Activated CD8-positive, alpha-beta T cell treated with anti-CD3 and anti-CD28 coated beads for 36 hours (primary cell): ENCODE measurements at regions of chr12 and their contacts with region 1.

Region 1: DNA sequence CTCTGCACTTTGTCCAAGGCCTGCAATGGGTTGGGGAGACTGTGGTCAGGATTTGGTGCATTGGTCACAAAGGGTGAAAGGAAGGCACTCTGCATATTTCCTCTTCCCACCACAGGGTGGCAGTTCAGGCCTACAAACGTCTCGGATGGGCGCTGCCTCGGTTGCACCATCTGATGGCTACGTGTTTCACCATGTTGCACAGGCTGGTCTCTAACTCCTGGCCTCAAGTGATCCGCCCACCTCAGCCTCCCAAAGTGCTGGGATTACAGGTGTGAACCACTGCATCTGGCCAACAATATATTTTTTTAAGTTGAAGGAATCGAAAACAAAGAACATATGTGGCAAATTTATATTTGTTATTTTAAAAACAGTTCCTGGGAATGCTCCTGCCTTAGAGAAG is 35.1 kb downstream of the TMBIM6 start:
- DNase-seq: peak; percentile 82
- ATAC-seq: peak; percentile 97
- H3K4me3 Mint-ChIP-seq: no peak overlapping the region
- H3K27ac Mint-ChIP-seq: peak overlapping the region; percentile 33
- H3K4me1 Mint-ChIP-seq: peaks cover 13% of the 10 kb centered on the region
- H3K27me3 Mint-ChIP-seq: peaks cover 8% of the 10 kb centered on the region
- CTCF ChIP-seq: peak; percentile 79

Region 2: GRCh38 chr12:49707128-49707811 is 69.1 kb before region 1 on chr12 and contains the start of gene FMNL3:
- CTCF ChIA-PET with region 1: interaction called, 11 read pairs
- POLR2A ChIA-PET with region 1: no interaction called
- intact Hi-C with region 1: no loop called
- DNase-seq: peak; percentile 98
- ATAC-seq: peak; percentile 91
- H3K4me3 Mint-ChIP-seq: peak within 1 kb of the TSS; percentile 86
- H3K27ac Mint-ChIP-seq: peak within 1 kb of the TSS; percentile 86
- H3K4me1 Mint-ChIP-seq: peaks cover 43% of the 10 kb centered on the region
- H3K27me3 Mint-ChIP-seq: peaks cover 12% of the 10 kb centered on the region
- CTCF ChIP-seq: peak; percentile 97
- total RNA-seq, gene FMNL3: 22.8 to 23.5 TPM

Region 3: DNA sequence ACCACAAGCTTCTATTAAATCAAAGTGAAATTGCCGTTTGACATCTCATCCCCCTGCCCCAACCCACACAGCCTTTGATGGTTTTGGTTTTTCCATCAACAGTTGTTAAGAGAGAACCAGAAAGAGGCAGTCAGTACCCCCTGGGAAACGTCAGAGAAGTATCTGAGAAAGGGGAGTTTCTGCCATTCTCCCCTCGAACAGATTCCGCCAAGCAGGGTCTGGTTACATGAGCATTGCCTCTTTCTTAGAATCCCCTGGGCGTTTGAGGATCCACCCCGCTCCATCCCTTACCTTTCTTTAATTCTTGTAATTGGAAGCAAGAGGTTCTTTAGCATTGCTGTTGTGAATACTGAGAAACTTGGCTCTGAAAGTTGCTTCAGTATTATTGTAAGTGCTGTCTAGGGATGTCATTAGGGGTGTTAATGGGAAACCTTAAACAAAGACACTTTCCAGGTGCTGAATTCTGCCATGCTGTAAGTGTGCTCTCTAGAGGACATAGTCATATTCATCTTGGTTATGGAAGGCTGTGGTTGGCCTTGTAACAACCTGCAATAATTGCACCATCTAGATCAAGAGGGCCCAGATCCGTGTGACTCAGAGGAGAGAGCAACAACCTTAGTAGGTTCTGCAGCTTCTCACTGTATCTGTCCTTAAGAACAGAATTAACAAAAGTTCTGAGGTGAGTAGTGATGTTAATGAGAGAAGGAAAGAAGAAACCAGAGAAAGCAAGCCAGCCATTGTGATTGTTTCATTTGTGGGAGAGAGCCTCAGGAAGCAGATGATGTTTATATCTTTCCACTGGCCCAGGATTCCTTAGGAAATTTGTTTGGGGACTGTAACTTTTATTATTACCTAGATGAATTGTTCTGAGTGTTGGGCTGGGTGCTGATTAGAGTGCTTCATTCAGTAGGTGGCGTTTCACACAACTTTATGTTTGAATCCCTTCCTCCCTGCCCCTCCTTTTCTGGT is 26.1 kb before region 1 on chr12:
- CTCF ChIA-PET with region 1: interaction called, 35 read pairs
- POLR2A ChIA-PET with region 1: interaction called, 6 read pairs
- intact Hi-C with region 1: no loop called
- DNase-seq: peak; percentile 85
- ATAC-seq: peak; percentile 84
- H3K4me3 Mint-ChIP-seq: peak overlapping the region; percentile 77
- H3K27ac Mint-ChIP-seq: peak overlapping the region; percentile 96
- H3K4me1 Mint-ChIP-seq: peaks cover 84% of the 10 kb centered on the region
- H3K27me3 Mint-ChIP-seq: no peaks in the 10 kb centered on the region
- CTCF ChIP-seq: no peak

Region 4: DNA sequence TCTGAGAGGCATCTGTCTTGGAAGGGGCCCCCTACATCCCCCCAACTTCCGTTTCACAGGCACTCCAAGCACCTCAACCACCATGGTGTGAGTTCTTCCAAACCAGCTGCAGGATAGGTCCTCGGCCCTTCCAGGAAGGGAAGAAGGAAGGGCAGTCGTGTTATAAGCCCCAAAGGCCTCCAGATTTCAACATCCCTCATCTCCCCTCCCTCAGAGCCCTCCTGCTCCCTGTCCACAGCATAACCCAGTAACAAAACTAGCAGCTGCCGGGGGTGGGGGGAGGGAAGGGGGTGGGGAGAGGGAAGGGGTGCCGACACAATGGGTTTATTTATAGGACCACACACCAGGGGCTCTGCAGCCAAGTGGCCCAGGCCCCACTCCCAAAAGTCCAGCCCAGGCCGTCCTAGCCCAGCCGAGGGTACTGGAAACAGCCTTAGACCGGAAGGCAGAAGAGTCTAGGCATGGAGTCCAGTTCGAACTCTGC is 33.5 kb after region 1 on chr12:
- CTCF ChIA-PET with region 1: interaction called, 10 read pairs
- POLR2A ChIA-PET with region 1: no interaction called
- intact Hi-C with region 1: no loop called
- DNase-seq: no peak
- ATAC-seq: no peak
- H3K4me3 Mint-ChIP-seq: no peak overlapping the region
- H3K27ac Mint-ChIP-seq: peak overlapping the region; percentile 30
- H3K4me1 Mint-ChIP-seq: peaks cover 10% of the 10 kb centered on the region
- H3K27me3 Mint-ChIP-seq: no peaks in the 10 kb centered on the region
- CTCF ChIP-seq: no peak

Region 5: DNA sequence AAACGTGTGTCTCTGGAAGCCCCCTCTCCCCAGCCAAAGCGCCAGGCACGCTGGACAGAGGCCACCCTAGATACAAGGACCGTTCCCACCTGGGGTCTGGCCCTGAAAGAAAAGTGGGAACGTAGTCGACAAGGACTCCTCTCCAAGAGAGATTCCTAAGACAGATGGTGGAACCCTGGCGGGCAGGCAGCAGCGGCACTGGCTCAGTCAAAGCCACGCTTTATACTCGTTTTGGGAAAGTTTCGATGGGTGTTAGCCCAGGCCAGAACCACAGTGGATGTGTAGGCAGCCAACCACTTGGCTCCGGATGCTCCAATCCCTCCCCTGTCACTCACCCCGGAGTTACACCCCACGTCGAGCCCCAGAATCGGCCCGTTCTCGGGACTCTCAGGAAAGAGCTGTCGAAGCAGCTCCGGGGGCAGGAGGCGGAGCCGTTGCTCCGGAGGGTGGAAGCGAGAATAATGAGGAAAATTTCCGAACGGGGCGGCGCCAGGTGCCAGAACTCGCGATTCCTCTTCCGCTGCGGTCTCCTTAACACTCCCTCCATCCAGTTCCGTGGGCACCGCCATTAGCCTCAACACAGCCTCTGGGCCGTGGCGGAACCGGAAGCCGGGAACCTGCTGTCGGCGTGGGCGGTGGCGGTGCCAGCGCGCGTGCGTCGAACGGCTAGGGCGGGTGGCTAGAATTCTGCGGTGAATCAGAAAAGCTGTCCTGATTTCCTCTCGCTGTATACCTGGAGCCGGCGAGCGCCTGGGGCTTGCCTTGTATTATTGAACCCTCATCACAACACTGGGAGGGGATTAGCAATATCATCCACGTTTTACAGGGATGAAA is 66.3 kb after region 1 on chr12 and contains the start of gene BCDIN3D:
- CTCF ChIA-PET with region 1: interaction called, 91 read pairs
- POLR2A ChIA-PET with region 1: interaction called, 5 read pairs
- intact Hi-C with region 1: loop called (anchors 2 kb)
- DNase-seq: peak; percentile 95
- ATAC-seq: peak; percentile 90
- H3K4me3 Mint-ChIP-seq: peak within 1 kb of the TSS; percentile 94
- H3K27ac Mint-ChIP-seq: peak within 1 kb of the TSS; percentile 91
- H3K4me1 Mint-ChIP-seq: peaks cover 28% of the 10 kb centered on the region
- H3K27me3 Mint-ChIP-seq: no peaks in the 10 kb centered on the region
- CTCF ChIP-seq: no peak
- total RNA-seq, gene BCDIN3D: 5.0 to 5.3 TPM